GM13976 (cell line): ENCODE measurements at regions of chr10 and their contacts with region 1.

Region 1: DNA sequence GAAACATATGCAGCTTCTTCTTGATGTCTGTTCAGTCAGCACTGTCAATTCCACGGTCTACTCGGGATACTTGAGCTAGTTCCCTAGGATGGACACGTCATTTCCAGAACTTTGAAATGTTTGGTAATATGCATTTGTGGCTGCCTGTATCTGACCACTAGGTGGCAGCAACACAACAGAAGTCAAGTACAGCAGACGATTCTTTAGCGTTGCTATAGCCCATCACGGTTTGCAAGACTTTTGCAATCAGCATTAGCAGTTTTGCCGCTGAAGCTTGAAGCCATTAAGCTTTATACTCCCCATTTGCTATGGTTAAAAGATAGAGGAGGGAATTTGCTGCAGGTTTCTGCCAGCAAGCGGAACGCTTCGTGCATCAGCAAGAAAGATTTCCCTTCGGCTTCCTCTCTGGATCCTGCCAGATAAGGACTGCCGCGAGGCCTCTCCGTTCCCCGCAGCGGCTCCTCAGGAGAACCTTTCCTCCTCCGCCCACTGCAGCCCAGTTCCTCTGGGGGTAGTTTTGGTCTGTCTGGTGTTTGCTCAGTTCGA is 63.5 kb downstream of the ABCC2 start:
- DNase-seq: peak; percentile 75
- CTCF ChIP-seq: peak; percentile 85

Region 2: GRCh38 chr10:100046021-100046486 is 200.1 kb after region 1 on chr10:
- in situ Hi-C with region 1: loop called (anchors 10 kb)
- DNase-seq: peak; percentile 71
- CTCF ChIP-seq: peak; percentile 94

Region 3: GRCh38 chr10:100403734-100404133 is 557.8 kb after region 1 on chr10:
- in situ Hi-C with region 1: no loop called
- DNase-seq: no peak
- CTCF ChIP-seq: no peak